ENCODE measurements at regions of chr9 and their contacts with region 1.

Region 1: DNA sequence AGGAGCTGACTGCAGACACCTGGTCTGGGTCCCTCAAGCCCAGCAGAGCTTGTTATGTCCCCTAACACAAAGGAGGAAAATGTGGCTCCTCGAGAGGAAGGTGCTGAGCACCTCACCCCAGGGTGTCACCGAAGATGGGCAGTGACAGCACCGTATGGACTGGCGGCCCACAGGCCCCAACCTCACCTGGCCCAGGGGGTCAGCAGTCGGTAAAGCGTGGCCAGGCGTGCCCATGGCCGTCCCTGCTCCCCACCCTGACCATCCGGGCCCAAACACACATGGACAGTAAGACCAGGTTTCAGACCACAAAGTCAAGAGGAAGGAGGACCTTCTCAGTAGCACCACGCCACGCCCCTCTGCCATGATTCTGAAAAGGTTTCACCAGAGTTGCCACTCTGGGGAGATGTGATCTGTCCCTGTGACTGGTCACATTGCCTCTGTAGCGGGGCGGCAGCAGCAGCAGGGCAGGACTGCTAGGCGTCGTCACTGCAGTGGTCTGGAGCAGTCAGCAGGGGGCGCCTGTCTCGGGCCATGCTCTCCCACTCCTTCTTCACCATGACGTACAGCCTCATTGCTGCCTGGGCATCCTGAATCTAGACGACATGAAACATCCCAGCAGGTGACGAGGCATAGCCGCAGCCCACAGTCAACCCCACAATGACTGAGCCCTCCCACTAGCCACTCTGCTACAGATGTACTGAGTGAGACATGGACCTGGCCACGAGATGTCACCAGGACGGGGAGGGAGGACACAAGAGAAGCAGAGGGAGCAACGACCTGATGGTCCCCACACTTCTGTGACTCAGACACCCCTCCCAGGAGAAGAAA is 11.1 kb downstream of the REXO4 start:
- DNase-seq: peak; percentile 60
- H3K4me3 Mint-ChIP-seq: no peak overlapping the region
- H3K27ac Mint-ChIP-seq: no peak overlapping the region
- H3K4me1 Mint-ChIP-seq: no peaks in the 10 kb centered on the region
- H3K27me3 Mint-ChIP-seq: no peaks in the 10 kb centered on the region
- CTCF ChIP-seq: peak; percentile 76

Region 2: DNA sequence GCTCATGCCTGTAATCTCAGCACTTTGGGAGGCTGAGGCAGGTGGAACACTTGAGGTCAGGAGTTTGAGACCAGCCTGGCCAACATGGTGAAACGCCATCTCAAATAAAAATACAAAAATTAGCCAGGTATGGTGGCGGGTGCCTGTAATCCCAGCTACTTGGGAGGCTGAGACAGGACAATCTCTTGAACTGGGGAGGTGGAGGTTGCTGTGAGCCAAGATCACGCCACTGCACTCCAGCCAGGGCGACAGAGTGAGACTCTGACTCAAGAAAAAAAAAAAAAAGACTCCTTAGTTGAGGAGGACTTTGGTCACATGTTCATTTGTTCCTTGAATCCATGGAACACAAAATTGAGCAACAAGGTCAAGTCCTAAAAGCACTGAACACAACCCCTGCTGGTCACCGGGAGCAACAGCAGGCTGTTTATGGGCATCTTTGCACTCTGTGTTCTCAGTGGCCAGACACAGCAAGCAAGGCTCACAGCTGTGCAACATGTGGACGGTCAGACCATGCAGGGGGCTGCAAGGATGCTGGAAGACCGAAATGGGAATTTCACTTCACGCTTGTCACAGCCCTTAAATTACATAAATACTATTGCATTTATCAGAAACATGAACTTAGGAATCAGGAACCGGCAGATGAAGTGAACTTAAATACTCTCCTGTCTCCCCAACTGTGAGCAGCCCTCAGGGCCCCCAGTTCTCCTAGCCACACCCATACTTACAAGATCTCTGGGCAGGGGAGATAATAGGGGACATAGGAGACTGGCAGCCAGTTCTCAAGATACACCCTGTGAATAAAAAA is 245.8 kb before region 1 on chr9:
- CTCF ChIA-PET with region 1: no interaction called
- POLR2A ChIA-PET with region 1: no interaction called
- intact Hi-C with region 1: no loop called
- DNase-seq: peak; percentile 86
- H3K4me3 Mint-ChIP-seq: no peak overlapping the region
- H3K27ac Mint-ChIP-seq: peak overlapping the region; percentile 63
- H3K4me1 Mint-ChIP-seq: no peaks in the 10 kb centered on the region
- H3K27me3 Mint-ChIP-seq: no peaks in the 10 kb centered on the region
- CTCF ChIP-seq: peak; percentile 59

Region 3: GRCh38 chr9:133394687-133395271 is 11.9 kb before region 1 on chr9:
- CTCF ChIA-PET with region 1: interaction called, 10 read pairs
- POLR2A ChIA-PET with region 1: interaction called, 3 read pairs
- intact Hi-C with region 1: no loop called
- DNase-seq: no peak
- H3K4me3 Mint-ChIP-seq: no peak overlapping the region
- H3K27ac Mint-ChIP-seq: no peak overlapping the region
- H3K4me1 Mint-ChIP-seq: no peaks in the 10 kb centered on the region
- H3K27me3 Mint-ChIP-seq: peaks cover 36% of the 10 kb centered on the region
- CTCF ChIP-seq: no peak

Region 4: GRCh38 chr9:133437753-133438531 is 31.2 kb after region 1 on chr9:
- CTCF ChIA-PET with region 1: no interaction called
- POLR2A ChIA-PET with region 1: no interaction called
- intact Hi-C with region 1: no loop called
- DNase-seq: no peak
- H3K4me3 Mint-ChIP-seq: no peak overlapping the region
- H3K27ac Mint-ChIP-seq: no peak overlapping the region
- H3K4me1 Mint-ChIP-seq: no peaks in the 10 kb centered on the region
- H3K27me3 Mint-ChIP-seq: no peaks in the 10 kb centered on the region
- CTCF ChIP-seq: no peak

Region 5: GRCh38 chr9:133485361-133486260 is 78.9 kb after region 1 on chr9:
- CTCF ChIA-PET with region 1: interaction called, 4 read pairs
- POLR2A ChIA-PET with region 1: no interaction called
- intact Hi-C with region 1: loop called (anchors 1 kb)
- DNase-seq: no peak
- H3K4me3 Mint-ChIP-seq: no peak overlapping the region
- H3K27ac Mint-ChIP-seq: no peak overlapping the region
- H3K4me1 Mint-ChIP-seq: no peaks in the 10 kb centered on the region
- H3K27me3 Mint-ChIP-seq: peaks cover 10% of the 10 kb centered on the region
- CTCF ChIP-seq: no peak

Measured in MCF 10A (cell line).